ENCODE measurements at regions of chr12 and their contacts with region 1.

Region 1: DNA sequence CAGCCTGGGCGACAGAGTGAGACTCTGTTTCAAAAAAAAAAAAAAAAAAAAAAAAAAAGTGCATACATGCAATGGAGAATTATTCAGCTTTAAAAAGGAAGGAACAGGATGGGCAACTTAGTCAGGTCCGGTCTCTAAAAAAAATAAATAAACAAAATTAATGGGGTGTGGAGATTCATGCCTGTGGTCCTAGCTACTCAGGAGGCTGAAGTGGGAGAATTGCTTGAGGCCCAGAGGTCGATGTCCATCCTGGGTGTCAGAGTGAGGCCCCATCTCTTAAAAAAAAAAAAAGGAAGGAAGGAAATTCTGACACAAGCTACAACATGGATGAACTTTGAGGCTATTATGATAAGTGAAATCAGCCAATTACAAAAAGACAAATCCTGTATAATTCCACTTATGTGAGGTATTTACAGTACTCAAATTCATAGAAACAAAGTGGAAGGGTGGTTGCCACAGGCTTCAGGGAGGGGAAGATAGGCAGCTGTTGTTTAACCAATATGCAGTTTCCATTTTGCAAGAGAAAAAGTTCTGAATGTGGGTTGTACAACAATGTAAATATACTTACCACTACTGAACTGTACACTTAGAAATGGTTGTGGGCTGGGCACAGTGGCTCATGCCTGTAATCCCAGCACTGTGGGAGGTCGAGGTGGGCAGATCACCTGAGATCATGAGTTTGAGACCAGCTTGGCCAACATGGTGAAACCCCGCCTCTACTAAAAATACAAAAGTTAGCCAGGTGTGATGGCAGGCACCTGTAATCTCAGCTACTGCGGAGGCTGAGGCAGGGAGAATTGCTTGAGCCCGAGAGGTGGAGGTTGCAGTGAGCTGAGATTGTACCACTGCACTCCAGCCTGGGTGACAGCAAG is 12.3 kb upstream of the APOF start:
- DNase-seq: no peak
- H3K4me3 ChIP-seq: no peak overlapping the region
- H3K27ac ChIP-seq: no peak overlapping the region
- H3K4me1 ChIP-seq: no peaks in the 10 kb centered on the region
- H3K27me3 ChIP-seq: no peaks in the 10 kb centered on the region
- CTCF ChIP-seq: no peak
- EP300 ChIP-seq: no peak
- POLR2A ChIP-seq: no peak

Region 2: GRCh38 chr12:56333679-56334489 is 41.1 kb before region 1 on chr12 and contains the start of gene PAN2:
- in situ Hi-C with region 1: no loop called
- intact Hi-C with region 1: no loop called
- DNase-seq: peak; percentile 96
- H3K4me3 ChIP-seq: peak within 1 kb of the TSS; percentile 45 to 73 (median 52)
- H3K27ac ChIP-seq: peak within 1 kb of the TSS; percentile 88 to 96 (median 94)
- H3K4me1 ChIP-seq: peaks cover 0 to 11% (median 3%) of the 10 kb centered on the region in 4 donors
- H3K27me3 ChIP-seq: no peaks in the 10 kb centered on the region
- CTCF ChIP-seq: peak; percentile 53 to 75 (median 65)
- EP300 ChIP-seq: no peak
- POLR2A ChIP-seq: peak; percentile 64
- total RNA-seq, gene PAN2: 45.2 to 206 (median 58.0) TPM

Region 3: GRCh38 chr12:56431850-56432249 is 56.9 kb after region 1 on chr12:
- in situ Hi-C with region 1: no loop called
- intact Hi-C with region 1: no loop called
- DNase-seq: no peak
- H3K4me3 ChIP-seq: no peak overlapping the region
- H3K27ac ChIP-seq: no peak overlapping the region
- H3K4me1 ChIP-seq: no peaks in the 10 kb centered on the region
- H3K27me3 ChIP-seq: no peaks in the 10 kb centered on the region
- CTCF ChIP-seq: no peak
- EP300 ChIP-seq: no peak
- POLR2A ChIP-seq: no peak

Region 4: DNA sequence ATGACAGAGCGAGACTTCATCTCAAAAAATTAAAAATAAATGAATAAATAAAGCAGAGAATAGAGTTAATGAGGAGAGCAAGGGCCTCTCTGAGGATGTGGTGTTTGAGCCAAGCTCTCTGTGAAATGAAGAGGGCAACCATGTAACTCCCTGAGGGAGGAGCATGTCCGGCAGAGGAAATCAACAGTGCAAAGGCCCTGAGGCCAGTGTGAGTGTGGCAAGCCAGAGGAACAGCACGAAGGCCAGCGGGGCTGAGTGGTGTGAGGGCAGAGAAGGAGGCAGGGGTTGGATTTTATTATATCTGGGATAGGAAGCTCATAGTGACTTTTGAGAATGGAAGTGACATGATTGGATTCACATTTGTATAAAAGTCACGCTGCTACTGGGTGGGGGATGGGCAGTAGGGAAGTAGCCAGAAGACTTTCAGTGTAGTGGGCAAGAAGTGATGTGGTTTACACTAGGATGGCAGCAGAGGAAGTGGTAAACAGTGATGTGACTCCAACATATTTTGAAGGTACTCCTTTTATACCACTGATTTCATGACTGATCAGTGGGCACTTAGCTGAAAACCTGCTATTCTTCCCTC is 782.7 kb after region 1 on chr12:
- in situ Hi-C with region 1: no loop called
- intact Hi-C with region 1: loop called (anchors 5 kb)
- DNase-seq: no peak
- H3K4me3 ChIP-seq: no peak overlapping the region
- H3K27ac ChIP-seq: peak overlapping the region in 1 of 4 donors; percentile 24
- H3K4me1 ChIP-seq: peaks cover 0 to 9% (median 5%) of the 10 kb centered on the region in 4 donors
- H3K27me3 ChIP-seq: no peaks in the 10 kb centered on the region
- CTCF ChIP-seq: no peak
- EP300 ChIP-seq: no peak
- POLR2A ChIP-seq: no peak

Measured in transverse colon (tissue), 4 donors.